Ascending aorta (tissue), 2 donors: ENCODE measurements at regions of chr5 and their contacts with region 1.

Region 1: GRCh38 chr5:147276497-147276896 is 41.7 kb downstream of the STK32A start:
- DNase-seq: no peak
- H3K4me3 ChIP-seq: no peak overlapping the region
- H3K27ac ChIP-seq: no peak overlapping the region
- H3K4me1 ChIP-seq: no peaks in the 10 kb centered on the region
- H3K27me3 ChIP-seq: no peaks in the 10 kb centered on the region
- CTCF ChIP-seq: no peak

Region 2: DNA sequence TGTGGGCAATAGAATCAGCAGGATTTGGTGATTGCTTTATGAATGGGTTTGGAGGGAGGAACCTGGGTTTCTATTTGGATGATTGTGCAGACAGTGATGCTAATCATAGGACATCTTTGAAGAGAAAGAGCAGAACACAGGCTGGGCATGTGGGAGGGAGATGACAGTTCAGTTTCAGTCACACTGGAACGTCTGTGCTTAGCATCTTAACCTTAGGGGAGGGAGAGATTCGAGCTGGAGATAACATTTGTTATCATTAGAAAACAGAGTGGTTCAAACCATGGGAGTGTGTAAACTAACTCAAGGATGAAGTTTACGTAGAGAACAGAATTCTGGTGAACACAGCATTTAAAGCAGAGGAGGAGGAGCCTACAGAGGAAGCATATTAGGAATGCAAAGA is 259.3 kb before region 1 on chr5:
- intact Hi-C with region 1: no loop called
- DNase-seq: no peak
- H3K4me3 ChIP-seq: no peak overlapping the region
- H3K27ac ChIP-seq: no peak overlapping the region
- H3K4me1 ChIP-seq: no peaks in the 10 kb centered on the region
- H3K27me3 ChIP-seq: no peaks in the 10 kb centered on the region
- CTCF ChIP-seq: no peak

Region 3: GRCh38 chr5:147346006-147346561 is 69.6 kb after region 1 on chr5:
- intact Hi-C with region 1: loop called (anchors 10 kb)
- DNase-seq: no peak
- H3K4me3 ChIP-seq: no peak overlapping the region
- H3K27ac ChIP-seq: no peak overlapping the region
- H3K4me1 ChIP-seq: no peaks in the 10 kb centered on the region
- H3K27me3 ChIP-seq: no peaks in the 10 kb centered on the region
- CTCF ChIP-seq: no peak